Mammary epithelial cell (primary cell): ENCODE measurements at regions of chr5 and their contacts with region 1.

Region 1: DNA sequence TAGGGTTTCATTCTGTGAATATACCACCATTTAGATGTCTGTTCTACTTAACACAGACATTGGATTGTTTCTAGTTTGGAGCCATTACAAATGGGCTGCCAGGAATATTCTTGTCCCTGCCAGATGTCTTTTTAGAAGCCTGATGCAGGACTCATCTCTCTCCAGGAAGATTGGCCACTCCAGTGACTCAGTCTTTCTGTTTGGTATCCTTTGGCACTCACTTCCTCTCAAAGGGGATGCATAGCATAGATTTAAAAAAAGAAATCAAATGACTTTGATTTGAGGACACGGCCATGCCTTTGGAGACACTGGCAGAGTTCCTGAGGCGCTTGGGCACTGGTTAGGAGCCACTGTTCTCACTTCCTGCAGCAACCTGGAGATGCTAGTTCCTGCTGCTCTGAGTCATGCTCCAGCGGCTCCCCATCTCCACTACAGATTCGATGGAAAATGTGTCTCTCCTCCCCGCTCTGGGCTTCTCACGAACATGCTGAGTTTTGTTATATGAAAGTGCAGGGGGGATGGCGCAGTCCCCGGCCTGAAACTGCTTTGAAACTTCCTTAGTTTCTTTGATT is 3.5 kb upstream of the ZNF366 start:
- DNase-seq: no peak
- H3K4me3 ChIP-seq: no peak overlapping the region
- H3K27ac ChIP-seq: no peak overlapping the region
- H3K4me1 ChIP-seq: peaks cover 20% of the 10 kb centered on the region
- H3K27me3 ChIP-seq: no peaks in the 10 kb centered on the region
- CTCF ChIP-seq: no peak

Region 2: GRCh38 chr5:72328172-72328571 is 182.5 kb before region 1 on chr5:
- CTCF ChIA-PET with region 1: no interaction called
- dilution Hi-C with region 1: no loop called
- in situ Hi-C with region 1: no loop called
- intact Hi-C with region 1: no loop called
- DNase-seq: peak; percentile 55
- H3K4me3 ChIP-seq: no peak overlapping the region
- H3K27ac ChIP-seq: no peak overlapping the region
- H3K4me1 ChIP-seq: peaks cover 18% of the 10 kb centered on the region
- H3K27me3 ChIP-seq: no peaks in the 10 kb centered on the region
- CTCF ChIP-seq: no peak

Region 3: DNA sequence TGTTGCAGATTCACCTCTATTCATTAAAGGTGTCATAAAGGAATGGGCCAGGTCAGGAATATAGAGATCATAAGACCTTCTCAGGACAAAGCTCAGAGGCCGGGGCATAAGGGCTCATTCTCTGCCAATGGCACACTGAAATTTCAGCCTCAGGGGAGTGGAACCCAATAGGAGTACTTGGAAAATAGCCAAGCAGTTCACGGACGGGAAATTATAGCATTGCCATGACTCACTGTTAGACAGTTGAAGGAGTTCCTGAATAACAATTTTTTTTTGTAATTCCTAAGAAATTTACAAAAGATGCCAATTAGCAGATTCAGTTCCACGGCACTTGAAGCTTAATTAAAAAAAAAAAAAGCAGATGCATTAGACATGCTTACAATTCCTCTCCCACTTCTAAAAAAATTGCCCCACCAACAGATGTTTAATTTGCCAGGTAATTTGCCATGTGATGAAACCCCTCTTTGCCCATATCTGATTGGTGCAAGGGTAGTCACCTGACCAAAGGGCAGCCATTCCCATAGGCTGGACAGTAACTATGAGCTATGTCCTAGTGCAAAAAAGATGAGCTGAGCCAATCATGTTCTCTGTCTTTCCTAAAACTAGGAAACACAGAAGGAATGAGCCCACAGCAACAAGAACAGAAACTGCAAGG is 131.9 kb before region 1 on chr5:
- CTCF ChIA-PET with region 1: no interaction called
- dilution Hi-C with region 1: no loop called
- in situ Hi-C with region 1: loop called in 1 of 2 experiments (anchors 10 kb)
- intact Hi-C with region 1: no loop called
- DNase-seq: peak; percentile 83
- H3K4me3 ChIP-seq: no peak overlapping the region
- H3K27ac ChIP-seq: peak overlapping the region; percentile 58
- H3K4me1 ChIP-seq: peaks cover 40% of the 10 kb centered on the region
- H3K27me3 ChIP-seq: no peaks in the 10 kb centered on the region
- CTCF ChIP-seq: no peak

Region 4: DNA sequence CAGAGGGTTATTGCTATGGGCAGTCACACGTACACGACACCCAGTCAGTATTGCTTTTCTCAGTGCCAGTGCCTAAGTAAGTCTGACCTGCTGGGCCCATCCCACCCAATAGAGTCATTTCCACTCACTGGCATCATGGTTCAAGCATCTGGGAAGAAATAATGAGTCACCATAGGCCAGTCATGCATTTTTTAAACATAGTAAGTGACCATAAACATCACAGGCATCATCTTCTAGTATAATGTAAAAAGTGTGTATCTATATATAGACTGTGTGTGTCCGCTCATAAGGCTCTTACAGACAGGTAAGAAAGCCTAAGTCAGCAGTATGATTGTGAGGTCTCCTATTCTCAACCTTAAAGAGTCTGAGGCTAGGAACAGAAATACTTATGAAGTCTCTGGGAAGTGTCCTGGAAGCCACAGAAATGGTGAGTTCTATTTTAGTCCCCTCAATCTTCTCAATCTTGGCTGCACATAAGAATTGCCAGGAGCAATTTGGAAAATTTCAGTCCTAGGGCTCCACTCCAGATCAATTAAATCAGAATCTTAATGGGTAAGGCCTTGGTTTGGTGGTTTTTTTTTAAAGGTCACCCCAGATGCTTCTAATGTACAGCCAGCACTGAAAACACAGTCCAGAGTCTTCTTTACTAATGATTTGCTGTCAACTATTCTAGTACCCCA is 68.7 kb before region 1 on chr5:
- CTCF ChIA-PET with region 1: no interaction called
- dilution Hi-C with region 1: no loop called
- in situ Hi-C with region 1: no loop called
- intact Hi-C with region 1: loop called (anchors 5 kb)
- DNase-seq: peak; percentile 92
- H3K4me3 ChIP-seq: no peak overlapping the region
- H3K27ac ChIP-seq: peak overlapping the region; percentile 45
- H3K4me1 ChIP-seq: peaks cover 23% of the 10 kb centered on the region
- H3K27me3 ChIP-seq: no peaks in the 10 kb centered on the region
- CTCF ChIP-seq: no peak